ENCODE measurements at regions of chr2 and their contacts with region 1.

Region 1: GRCh38 chr2:11234309-11234708 is 79.0 kb downstream of the SLC66A3 start:
- DNase-seq: no peak
- H3K4me3 ChIP-seq: no peak overlapping the region
- H3K27ac ChIP-seq: no peak overlapping the region
- H3K4me1 ChIP-seq: peaks cover 0 to 8% (median 0%) of the 10 kb centered on the region in 3 donors
- H3K27me3 ChIP-seq: no peaks in the 10 kb centered on the region
- CTCF ChIP-seq: peak; percentile 13 to 63 (median 46)
- POLR2A ChIP-seq: no peak

Region 2: GRCh38 chr2:11411768-11412448 is 177.6 kb after region 1 on chr2:
- intact Hi-C with region 1: loop called (anchors 10 kb)
- DNase-seq: no peak
- H3K4me3 ChIP-seq: peak overlapping the region in 3 of 4 donors; percentile 11 to 56 (median 13)
- H3K27ac ChIP-seq: no peak overlapping the region
- H3K4me1 ChIP-seq: peaks cover 0 to 11% (median 3%) of the 10 kb centered on the region in 3 donors
- H3K27me3 ChIP-seq: peaks cover 0 to 3% (median 0%) of the 10 kb centered on the region in 4 donors
- CTCF ChIP-seq: peak in 5 of 6 experiments; percentile 56 to 69 (median 60)
- POLR2A ChIP-seq: no peak